ENCODE measurements at regions of chr6 and their contacts with region 1.

Region 1: GRCh38 chr6:34248727-34249551 is at the start of gene SMIM29:
- DNase-seq: peak; percentile 96 to 98 (median 97)
- H3K4me3 ChIP-seq: peak within 1 kb of the TSS; percentile 81
- H3K27ac ChIP-seq: peak within 1 kb of the TSS; percentile 61 to 64
- H3K4me1 ChIP-seq: peaks cover 4% of the 10 kb centered on the region
- H3K27me3 ChIP-seq: no peaks in the 10 kb centered on the region
- CTCF ChIP-seq: peak; percentile 87 to 98 (median 96)
- EP300 ChIP-seq: no peak
- POLR2A ChIP-seq: peak; percentile 54
- total RNA-seq, gene SMIM29: 14.7 to 26.6 (median 17.8) TPM

Region 2: DNA sequence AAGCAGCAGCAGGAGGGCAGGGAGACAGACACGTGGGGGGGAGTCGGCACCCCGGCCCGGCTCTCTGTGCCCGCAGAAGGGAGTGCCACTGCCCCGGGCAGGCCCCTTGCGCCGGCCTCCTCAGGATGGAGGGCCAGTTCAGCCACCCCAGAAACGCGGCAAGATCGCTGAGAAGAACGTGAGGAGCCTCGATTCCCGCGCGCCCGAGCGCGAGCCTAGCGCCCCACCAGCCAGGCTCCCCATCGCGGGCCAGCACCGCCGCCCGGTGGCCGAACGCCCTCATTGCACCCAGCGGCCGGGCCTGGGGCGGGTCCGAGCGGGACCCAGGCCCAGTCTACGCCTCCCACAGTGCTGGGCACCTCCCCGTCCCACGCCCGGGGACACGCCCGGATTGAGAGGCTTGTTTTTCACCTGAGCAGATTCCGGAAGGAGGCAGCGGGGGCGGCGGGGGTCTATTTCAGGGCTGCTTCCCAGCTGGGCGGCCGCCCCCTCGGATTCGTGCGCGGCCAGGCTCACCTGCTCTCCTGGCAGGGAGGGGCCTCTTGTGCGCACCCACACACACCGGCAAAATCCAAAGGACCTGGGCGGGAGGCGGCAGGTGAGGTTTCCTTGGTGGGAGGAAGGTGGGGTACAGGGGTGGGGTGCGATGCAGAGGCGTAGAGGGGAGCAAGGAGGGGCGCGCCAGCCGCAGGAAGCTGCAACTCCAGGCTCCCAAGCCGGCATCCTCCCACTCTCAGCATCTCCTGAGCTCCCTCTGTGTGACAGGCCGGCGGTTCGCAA is 94.1 kb before region 1 on chr6:
- intact Hi-C with region 1: no loop called
- DNase-seq: peak; percentile 42 to 78 (median 61)
- H3K4me3 ChIP-seq: no peak overlapping the region
- H3K27ac ChIP-seq: no peak overlapping the region
- H3K4me1 ChIP-seq: peaks cover 3% of the 10 kb centered on the region
- H3K27me3 ChIP-seq: no peaks in the 10 kb centered on the region
- CTCF ChIP-seq: peak; percentile 83 to 95 (median 91)
- EP300 ChIP-seq: no peak
- POLR2A ChIP-seq: no peak

Region 3: GRCh38 chr6:34392497-34393190 is 143.7 kb after region 1 on chr6 and contains the start of gene NUDT3:
- intact Hi-C with region 1: loop called (anchors 1 to 5 kb)
- DNase-seq: peak; percentile 93 to 97 (median 94)
- H3K4me3 ChIP-seq: peak within 1 kb of the TSS; percentile 50
- H3K27ac ChIP-seq: peak within 1 kb of the TSS; percentile 82 to 91
- H3K4me1 ChIP-seq: peaks cover 3% of the 10 kb centered on the region
- H3K27me3 ChIP-seq: no peaks in the 10 kb centered on the region
- CTCF ChIP-seq: peak; percentile 91 to 95 (median 93)
- EP300 ChIP-seq: no peak
- POLR2A ChIP-seq: peak; percentile 87
- total RNA-seq, gene NUDT3: 23.2 to 60.7 (median 50.9) TPM

Region 4: GRCh38 chr6:34414999-34415858 is 166.3 kb after region 1 on chr6:
- intact Hi-C with region 1: loop called in 3 of 4 experiments (anchors 1 to 5 kb)
- DNase-seq: peak in 4 of 5 donors; percentile 43 to 73 (median 54)
- H3K4me3 ChIP-seq: no peak overlapping the region
- H3K27ac ChIP-seq: peak overlapping the region; percentile 45 to 53
- H3K4me1 ChIP-seq: peaks cover 6% of the 10 kb centered on the region
- H3K27me3 ChIP-seq: no peaks in the 10 kb centered on the region
- CTCF ChIP-seq: peak; percentile 35 to 87 (median 83)
- EP300 ChIP-seq: no peak
- POLR2A ChIP-seq: no peak

Region 5: DNA sequence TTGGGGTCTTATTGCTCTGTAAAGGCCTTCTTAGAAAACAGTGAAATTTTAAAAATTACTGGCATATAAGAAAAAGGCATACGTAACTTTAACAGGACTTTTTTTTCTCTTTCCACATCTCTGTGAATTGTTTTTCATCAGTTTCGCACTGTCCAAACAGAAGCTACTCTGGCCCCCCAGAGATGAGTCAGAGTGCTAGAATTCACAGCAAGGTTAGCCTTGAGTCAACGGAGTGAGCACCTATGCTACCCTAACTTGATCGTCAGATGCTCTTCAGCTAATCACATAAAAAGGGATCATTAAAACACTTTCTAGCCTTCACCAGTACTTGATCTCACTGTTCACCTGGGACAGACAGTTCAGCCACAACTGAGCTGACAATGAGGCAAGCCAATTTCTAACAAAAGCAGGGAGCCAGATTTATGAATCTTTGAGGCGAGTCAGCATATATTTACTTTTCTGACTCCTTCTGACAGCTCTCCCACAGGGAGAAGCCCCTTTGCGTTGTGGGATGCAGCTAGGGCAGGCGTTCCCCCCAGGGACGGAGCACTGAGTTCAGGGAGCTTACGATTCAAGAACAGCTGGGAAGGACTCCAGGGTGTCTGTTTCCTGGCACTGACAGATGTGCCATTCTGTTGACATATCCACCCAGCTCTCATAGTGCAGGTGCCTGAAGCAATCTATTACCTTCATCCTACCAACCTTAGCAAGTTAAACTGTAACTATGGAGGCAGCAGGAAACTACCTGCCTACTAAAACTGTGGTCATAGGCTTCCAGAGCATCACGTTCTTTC is 353.6 kb after region 1 on chr6:
- intact Hi-C with region 1: loop called in 1 of 4 experiments (anchors 10 kb)
- DNase-seq: no peak
- H3K4me3 ChIP-seq: no peak overlapping the region
- H3K27ac ChIP-seq: no peak overlapping the region
- H3K4me1 ChIP-seq: peaks cover 20% of the 10 kb centered on the region
- H3K27me3 ChIP-seq: no peaks in the 10 kb centered on the region
- CTCF ChIP-seq: no peak
- EP300 ChIP-seq: no peak
- POLR2A ChIP-seq: no peak

Measured in ovary (tissue), 10 donors.